ENCODE measurements at regions of chr3 and their contacts with region 1.

Region 1: GRCh38 chr3:16550676-16551341 is 37.3 kb upstream of the RFTN1 start:
- DNase-seq: peak; percentile 71 to 81 (median 74)
- ATAC-seq: peak; percentile 90
- H3K4me3 ChIP-seq: no peak overlapping the region
- H3K27ac ChIP-seq: no peak overlapping the region
- H3K4me1 ChIP-seq: no peaks in the 10 kb centered on the region
- H3K27me3 ChIP-seq: no peaks in the 10 kb centered on the region
- CTCF ChIP-seq: peak; percentile 53 to 93 (median 89)
- POLR2A ChIP-seq: no peak

Region 2: DNA sequence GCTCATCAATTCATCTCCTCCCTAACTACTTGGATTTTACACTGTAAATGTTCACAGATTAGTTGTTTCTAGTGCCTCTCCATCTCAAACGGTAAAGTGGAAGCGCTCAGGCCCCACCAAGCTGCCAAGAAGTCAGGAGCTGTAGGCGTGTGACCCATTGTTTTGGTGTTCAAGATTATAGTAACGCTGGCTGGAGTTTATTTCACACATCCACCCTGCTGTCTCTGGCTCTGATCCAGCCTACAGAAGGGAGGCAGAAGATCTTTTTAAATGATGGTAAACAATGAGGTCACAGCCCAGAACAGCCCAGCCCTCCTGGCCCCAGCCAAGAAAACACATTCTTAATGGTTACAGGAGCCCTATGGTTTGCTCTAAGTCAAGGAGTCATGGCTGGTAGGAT is 402.0 kb before region 1 on chr3:
- intact Hi-C with region 1: no loop called
- DNase-seq: peak in 3 of 4 donors; percentile 29 to 40 (median 33)
- ATAC-seq: peak; percentile 42
- H3K4me3 ChIP-seq: no peak overlapping the region
- H3K27ac ChIP-seq: no peak overlapping the region
- H3K4me1 ChIP-seq: no peaks in the 10 kb centered on the region
- H3K27me3 ChIP-seq: no peaks in the 10 kb centered on the region
- CTCF ChIP-seq: no peak
- POLR2A ChIP-seq: no peak

Region 3: DNA sequence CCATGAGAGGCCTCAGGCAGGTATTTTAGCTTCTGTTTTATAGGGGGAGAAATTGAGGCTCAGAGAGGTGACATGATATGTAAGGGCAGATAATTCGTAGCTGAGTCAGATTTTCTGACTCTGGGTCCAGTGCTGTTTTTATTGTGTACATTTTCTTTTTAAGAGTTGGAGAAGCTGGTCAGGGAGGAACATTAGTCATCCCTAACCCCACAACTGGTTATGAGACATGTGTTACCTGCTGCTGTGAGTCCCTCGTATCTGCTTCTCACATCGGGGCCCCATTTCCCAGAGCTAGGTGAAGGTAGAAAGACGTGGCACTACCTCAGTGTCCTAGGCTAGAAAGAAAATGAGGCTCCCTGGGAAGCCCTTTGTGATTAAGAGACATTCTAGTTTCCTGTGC is 347.8 kb before region 1 on chr3:
- intact Hi-C with region 1: no loop called
- DNase-seq: no peak
- ATAC-seq: no peak
- H3K4me3 ChIP-seq: no peak overlapping the region
- H3K27ac ChIP-seq: no peak overlapping the region
- H3K4me1 ChIP-seq: no peaks in the 10 kb centered on the region
- H3K27me3 ChIP-seq: no peaks in the 10 kb centered on the region
- CTCF ChIP-seq: no peak
- POLR2A ChIP-seq: no peak

Region 4: DNA sequence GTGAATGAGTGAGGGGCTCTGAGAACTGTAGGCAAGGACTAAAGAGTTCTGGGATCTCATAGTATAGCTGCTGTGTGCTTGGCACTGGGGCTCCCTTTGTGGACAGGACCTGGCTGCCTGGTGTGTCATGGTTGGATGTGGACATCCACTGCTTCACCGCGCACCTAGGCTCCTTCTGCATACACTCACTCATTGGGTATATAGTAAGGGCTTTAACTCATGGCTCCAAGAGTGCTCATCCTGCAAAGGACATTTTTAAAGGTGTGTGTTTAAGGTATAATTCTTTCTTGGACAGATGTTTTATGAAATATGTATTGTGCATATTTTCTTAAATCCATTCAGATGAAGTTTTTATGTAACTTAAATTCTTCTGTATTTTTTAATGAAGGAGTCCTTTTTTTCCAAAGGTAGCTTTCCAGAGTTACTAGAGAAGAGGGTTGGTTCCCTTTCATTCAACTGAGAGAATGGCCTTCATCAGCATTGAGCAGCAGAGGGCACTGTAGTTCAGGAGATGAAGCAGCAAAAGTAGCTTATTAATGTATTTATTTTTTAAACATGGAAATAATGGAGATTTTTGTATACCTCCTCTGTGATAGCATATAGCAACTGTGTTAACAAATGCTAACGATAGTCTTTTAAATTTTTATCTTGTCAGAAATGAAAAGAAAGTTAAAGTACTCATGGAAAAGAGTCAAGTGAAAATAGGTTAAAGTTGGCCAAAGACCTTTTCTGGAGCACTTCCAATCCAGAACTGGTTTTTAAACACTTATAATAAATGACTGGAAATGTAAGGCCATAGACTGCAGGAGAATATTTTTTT is 260.6 kb before region 1 on chr3:
- intact Hi-C with region 1: loop called (anchors 5 kb)
- DNase-seq: peak; percentile 28 to 54 (median 46)
- ATAC-seq: peak; percentile 66
- H3K4me3 ChIP-seq: no peak overlapping the region
- H3K27ac ChIP-seq: no peak overlapping the region
- H3K4me1 ChIP-seq: no peaks in the 10 kb centered on the region
- H3K27me3 ChIP-seq: no peaks in the 10 kb centered on the region
- CTCF ChIP-seq: peak; percentile 17 to 79 (median 62)
- POLR2A ChIP-seq: no peak

Region 5: DNA sequence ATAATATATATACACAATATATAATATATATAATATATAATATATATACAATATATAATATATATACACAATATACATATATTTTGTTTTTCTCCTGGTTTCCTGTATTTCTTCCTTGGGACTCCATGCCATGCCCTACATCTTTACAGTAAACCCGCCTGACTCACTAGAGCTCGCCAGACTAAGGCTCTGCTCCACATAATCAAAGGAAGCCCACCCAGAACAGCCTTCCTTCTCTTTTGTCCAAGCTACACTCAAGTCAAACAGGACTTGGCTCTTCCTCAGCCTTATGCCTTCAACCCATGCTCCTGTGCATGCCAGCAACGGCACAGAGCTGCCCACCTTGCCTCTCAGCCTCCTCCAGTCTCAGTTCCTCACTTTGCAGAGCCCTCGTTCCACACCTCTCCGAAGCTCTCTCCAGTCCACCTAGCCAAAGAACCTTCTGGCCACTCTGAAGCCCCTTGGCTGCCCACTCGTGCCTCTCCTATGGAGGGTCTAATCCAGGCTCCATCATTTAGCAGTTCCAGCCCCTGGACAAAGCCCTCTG is 146.4 kb before region 1 on chr3:
- intact Hi-C with region 1: no loop called
- DNase-seq: no peak
- ATAC-seq: no peak
- H3K4me3 ChIP-seq: no peak overlapping the region
- H3K27ac ChIP-seq: no peak overlapping the region
- H3K4me1 ChIP-seq: no peaks in the 10 kb centered on the region
- H3K27me3 ChIP-seq: peaks cover 0 to 2% of the 10 kb centered on the region in 2 donors
- CTCF ChIP-seq: no peak
- POLR2A ChIP-seq: no peak